Prostate gland (tissue), 2 donors: ENCODE measurements at regions of chr1 and their contacts with region 1.

Region 1: GRCh38 chr1:33127001-33127791 is 46.2 kb downstream of the AZIN2 start:
- DNase-seq: peak; percentile 97
- H3K4me3 ChIP-seq: peak overlapping the region; percentile 44 to 55
- H3K27ac ChIP-seq: peak overlapping the region; percentile 83 to 87
- H3K4me1 ChIP-seq: peaks cover 4% of the 10 kb centered on the region
- H3K27me3 ChIP-seq: no peaks in the 10 kb centered on the region
- CTCF ChIP-seq: peak; percentile 95 to 98 (median 98)
- POLR2A ChIP-seq: peak; percentile 52

Region 2: DNA sequence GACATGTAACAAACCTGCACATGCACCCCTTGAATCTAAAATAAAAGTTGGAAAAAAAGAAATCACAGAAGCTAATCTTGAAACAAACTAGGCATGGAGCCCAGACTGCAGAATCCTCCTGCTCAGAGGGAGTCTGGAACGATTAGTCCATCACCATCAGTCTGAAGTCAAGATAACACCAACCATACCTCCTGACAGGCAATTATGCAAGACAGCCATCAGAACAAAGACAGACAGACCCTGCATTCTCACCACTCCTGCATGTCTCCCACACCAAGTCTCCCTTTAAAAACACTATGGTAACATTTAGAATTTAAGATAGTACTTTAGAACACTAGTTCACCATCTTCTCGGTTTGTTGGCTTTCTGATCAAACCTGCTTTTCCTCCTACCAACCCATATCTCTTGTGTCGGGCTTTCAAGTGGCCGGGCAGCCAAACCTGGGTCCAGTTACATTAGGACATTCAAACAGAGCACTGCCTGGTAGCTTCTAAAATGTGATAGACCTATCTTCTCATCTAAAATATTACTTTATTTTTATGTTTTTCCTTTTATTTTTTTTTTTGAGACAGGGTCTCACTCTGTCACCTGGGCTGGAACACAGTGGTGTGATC is 320.2 kb before region 1 on chr1:
- intact Hi-C with region 1: no loop called
- DNase-seq: no peak
- H3K4me3 ChIP-seq: no peak overlapping the region
- H3K27ac ChIP-seq: no peak overlapping the region
- H3K4me1 ChIP-seq: no peaks in the 10 kb centered on the region
- H3K27me3 ChIP-seq: no peaks in the 10 kb centered on the region
- CTCF ChIP-seq: no peak
- POLR2A ChIP-seq: no peak

Region 3: DNA sequence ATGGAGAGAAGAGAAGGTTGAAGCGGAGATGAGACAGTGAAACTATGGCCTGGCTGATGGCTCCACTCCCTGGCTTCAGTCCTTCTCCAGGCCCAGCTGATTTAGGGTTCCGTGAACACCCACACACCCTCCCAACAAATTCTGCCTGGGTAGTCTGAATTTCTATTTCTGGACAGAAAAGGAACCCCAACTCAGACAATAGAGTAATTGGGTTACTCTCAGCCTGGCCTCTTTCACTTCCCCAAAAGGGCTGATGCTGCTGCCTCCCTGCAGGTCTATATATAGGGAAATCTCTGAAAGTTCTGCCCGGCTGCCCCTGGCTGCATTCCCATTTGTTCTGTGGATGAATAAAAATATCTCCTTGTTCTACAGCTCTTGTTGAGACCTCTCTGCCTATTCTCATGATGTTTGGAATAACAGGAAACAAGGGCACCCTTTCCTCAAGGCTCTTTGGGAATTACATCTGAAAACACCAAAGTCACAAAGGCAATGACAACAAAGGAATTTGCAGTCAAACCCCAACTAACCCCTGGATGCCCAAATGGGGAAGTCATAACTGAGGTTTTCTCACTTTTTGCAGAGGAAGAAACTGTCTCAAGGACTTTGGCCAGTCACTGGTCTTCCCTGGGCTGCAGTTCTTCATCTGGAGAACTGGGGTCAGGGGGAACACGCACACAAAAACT is 333.9 kb after region 1 on chr1:
- intact Hi-C with region 1: loop called (anchors 10 kb)
- DNase-seq: no peak
- H3K4me3 ChIP-seq: no peak overlapping the region
- H3K27ac ChIP-seq: peak overlapping the region; percentile 45 to 61
- H3K4me1 ChIP-seq: no peaks in the 10 kb centered on the region
- H3K27me3 ChIP-seq: no peaks in the 10 kb centered on the region
- CTCF ChIP-seq: no peak
- POLR2A ChIP-seq: no peak